ENCODE measurements at regions of chr1 and their contacts with region 1.

Region 1: GRCh38 chr1:228457396-228458176 is 29.6 kb upstream of the RNF187 start:
- DNase-seq: peak; percentile 99
- H3K4me3 ChIP-seq: peak overlapping the region; percentile 84
- H3K27ac ChIP-seq: peak overlapping the region; percentile 87
- H3K4me1 ChIP-seq: peaks cover 11% of the 10 kb centered on the region
- H3K27me3 ChIP-seq: peaks cover 24% of the 10 kb centered on the region
- CTCF ChIP-seq: peak; percentile 45

Region 2: DNA sequence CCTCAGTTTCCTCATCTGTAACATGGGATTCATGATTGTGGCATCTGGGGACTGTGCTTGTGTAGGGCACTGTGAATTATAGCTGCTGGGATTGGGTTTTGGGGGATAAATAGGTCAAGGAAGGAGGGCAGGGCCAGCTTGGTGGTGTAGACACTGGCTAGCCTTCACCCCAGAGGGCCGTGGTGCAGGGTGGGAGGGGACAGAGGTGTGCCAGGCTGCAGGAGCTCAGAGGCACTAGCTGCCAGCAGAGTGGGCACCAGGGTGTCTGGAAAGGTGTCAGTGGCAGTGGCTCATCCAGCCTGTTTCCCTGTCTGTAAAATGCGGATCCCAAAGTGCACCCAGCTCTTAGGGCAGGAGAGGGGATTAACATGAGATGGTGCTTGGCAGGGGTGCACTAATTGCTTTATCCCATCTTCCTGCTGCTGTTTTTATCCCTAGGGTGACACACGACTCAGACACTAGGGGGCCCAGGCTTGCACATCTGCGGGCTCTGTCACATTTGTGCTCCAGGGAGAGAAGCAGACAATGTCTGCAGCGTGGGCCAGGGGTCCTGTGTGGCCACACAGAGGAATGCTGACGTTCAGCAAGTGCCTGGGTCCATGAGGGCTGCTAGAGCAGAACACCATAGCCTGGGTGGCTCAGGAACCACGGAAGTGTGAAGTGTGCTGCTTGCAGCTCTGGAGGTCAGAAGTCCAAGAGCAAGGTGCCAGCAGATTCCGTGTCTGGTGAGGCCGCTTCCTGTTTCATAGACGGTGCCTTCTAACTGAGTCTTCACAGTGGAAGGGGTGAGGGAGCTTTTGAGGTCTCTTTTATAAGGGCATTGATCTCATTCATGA is 230.4 kb before region 1 on chr1:
- CTCF ChIA-PET with region 1: no interaction called
- POLR2A ChIA-PET with region 1: interaction called, 10 read pairs
- intact Hi-C with region 1: no loop called
- DNase-seq: peak; percentile 74
- H3K4me3 ChIP-seq: no peak overlapping the region
- H3K27ac ChIP-seq: no peak overlapping the region
- H3K4me1 ChIP-seq: no peaks in the 10 kb centered on the region
- H3K27me3 ChIP-seq: no peaks in the 10 kb centered on the region
- CTCF ChIP-seq: peak; percentile 59

Region 3: GRCh38 chr1:228416217-228416933 is 41.2 kb before region 1 on chr1 and contains the start of gene TRIM17:
- CTCF ChIA-PET with region 1: no interaction called
- POLR2A ChIA-PET with region 1: interaction called, 16 read pairs
- intact Hi-C with region 1: no loop called
- DNase-seq: peak; percentile 38
- H3K4me3 ChIP-seq: peak within 1 kb of the TSS; percentile 49
- H3K27ac ChIP-seq: no peak within 1 kb of the TSS
- H3K4me1 ChIP-seq: peaks cover 15% of the 10 kb centered on the region
- H3K27me3 ChIP-seq: peaks cover 4% of the 10 kb centered on the region
- CTCF ChIP-seq: peak; percentile 50
- total RNA-seq, gene TRIM17: 0.54 and 0.72 TPM in 2 replicates

Region 4: DNA sequence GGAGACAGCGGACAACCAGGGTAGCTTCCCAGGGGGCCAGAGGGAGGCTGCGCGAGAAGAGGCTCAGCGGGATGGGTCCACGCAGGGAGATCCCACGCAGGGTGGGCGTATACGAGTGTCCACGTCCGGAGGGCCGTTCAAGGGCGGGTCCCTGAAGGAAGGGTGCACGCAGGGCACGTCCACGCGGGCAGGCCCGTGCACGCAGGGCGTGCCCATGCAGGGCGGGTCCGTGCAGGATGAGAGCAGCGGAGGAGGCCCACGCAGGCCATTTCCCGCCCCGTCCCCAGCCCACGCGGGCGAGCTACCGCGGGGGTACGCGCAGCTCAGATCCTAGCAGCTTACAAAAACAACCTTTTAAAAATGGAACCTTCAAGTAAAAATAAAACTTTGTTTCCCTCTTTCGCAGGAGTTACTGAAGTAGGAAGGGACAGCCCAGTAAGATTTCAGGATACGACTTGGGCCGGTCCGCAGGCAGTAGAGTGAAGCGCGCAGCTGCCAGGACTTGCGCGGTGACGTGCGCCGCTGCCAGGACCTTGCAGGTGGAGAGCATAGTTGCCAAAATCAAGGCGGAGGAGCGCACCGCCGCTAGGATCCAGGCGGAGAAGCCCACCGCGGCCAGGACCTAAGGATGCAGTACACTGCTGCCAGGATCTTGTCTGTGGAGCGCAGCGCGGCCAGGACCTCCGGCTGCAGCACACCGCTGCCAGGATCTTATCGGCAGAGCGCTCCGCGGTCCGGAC is 29.2 kb after region 1 on chr1:
- CTCF ChIA-PET with region 1: no interaction called
- POLR2A ChIA-PET with region 1: interaction called, 4 read pairs
- intact Hi-C with region 1: loop called (anchors 1 kb)
- DNase-seq: peak; percentile 93
- H3K4me3 ChIP-seq: peak overlapping the region; percentile 94
- H3K27ac ChIP-seq: peak overlapping the region; percentile 98
- H3K4me1 ChIP-seq: peaks cover 40% of the 10 kb centered on the region
- H3K27me3 ChIP-seq: no peaks in the 10 kb centered on the region
- CTCF ChIP-seq: no peak

Region 5: DNA sequence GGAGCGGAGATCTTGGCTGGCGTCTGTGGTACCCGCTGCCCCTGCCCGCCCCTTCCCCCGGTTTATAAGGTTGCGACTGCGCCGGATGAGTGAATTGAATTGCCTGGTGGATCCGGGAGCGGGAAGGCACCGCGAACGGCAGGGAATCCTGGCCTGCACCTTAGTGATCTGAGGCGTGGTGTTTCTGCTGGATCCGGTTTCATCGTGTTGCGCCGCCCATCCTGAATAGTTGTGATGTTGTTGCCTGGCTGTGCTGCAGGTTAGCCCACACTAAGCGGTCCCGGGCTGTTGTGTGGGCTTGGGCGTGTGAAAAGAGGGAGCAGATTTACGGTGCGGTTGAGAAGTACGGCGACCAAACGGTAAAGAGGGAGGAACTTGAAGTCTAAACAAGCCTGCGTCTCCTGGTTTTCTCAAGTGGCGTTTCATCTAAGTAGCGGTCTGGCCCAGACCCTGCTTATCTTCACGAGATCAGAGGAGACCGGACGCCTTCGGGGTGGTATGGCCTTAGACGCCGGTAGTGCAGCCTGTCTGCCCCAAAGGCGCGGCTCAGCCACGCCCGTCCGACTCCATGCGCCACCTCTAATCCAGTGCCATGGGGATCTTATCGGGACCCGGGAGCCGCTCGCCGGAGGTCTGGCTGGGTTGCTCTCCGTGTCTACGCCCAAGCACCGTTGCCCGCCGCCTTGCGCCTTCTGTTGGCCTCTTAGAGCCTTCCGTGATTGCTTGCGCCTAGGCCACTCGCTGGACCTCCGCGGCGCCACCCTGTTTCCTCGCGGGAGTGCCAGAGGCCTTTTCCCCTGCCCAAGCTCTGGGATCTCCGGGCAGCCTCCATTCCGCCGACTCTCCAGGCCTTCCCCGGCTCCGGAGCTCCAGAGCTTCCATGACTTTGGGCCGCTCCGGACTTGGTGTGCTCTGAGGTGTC is 190.2 kb after region 1 on chr1:
- CTCF ChIA-PET with region 1: no interaction called
- POLR2A ChIA-PET with region 1: interaction called, 11 read pairs
- intact Hi-C with region 1: no loop called
- DNase-seq: peak; percentile 63
- H3K4me3 ChIP-seq: peak overlapping the region; percentile 42
- H3K27ac ChIP-seq: no peak overlapping the region
- H3K4me1 ChIP-seq: no peaks in the 10 kb centered on the region
- H3K27me3 ChIP-seq: peaks cover 13% of the 10 kb centered on the region
- CTCF ChIP-seq: no peak

Measured in A673 (cell line).